B cell (primary cell): ENCODE measurements at regions of chr3 and their contacts with region 1.

Region 1: DNA sequence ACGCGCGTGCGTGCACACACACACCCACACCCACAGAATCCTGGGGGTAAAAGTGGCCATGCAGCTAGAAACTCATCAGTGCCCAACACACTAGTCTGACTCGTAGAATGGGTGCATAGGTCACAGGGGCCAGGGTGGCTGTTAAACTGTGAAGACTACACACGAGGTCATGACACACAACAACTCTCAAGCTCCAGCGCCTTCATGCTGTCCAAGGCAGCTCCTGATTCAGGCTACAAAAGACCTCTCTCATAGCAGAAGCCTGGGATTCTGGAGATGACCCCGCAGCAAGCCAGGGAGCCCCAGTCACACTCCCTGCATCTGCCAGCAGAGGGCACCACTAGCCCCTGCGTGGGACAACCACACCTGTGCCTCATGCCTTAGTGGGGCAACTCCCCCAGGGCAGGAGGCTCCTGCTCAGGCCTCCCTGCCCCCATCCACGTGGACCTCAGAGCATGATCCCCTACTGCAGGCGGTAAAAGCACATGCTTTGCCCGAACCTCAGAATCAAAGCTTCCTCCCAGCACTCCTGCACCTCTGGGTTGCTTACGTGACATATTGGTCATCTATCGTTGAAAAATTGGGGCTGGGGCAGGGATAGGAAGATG is 93.1 kb downstream of the LRIG1 start:
- DNase-seq: peak; percentile 70
- ATAC-seq: peak; percentile 89
- H3K4me3 ChIP-seq: no peak overlapping the region
- H3K4me3 Mint-ChIP-seq: no peak overlapping the region
- H3K27ac ChIP-seq: no peak overlapping the region
- H3K27ac Mint-ChIP-seq: no peak overlapping the region
- H3K4me1 ChIP-seq: no peaks in the 10 kb centered on the region
- H3K4me1 Mint-ChIP-seq: no peaks in the 10 kb centered on the region
- H3K27me3 ChIP-seq: no peaks in the 10 kb centered on the region
- H3K27me3 Mint-ChIP-seq: no peaks in the 10 kb centered on the region
- CTCF ChIP-seq: peak; percentile 80

Region 2: GRCh38 chr3:66276705-66277274 is 130.9 kb before region 1 on chr3:
- CTCF ChIA-PET with region 1: interaction called, 33 read pairs
- POLR2A ChIA-PET with region 1: no interaction called
- intact Hi-C with region 1: loop called (anchors 1 kb)
- DNase-seq: peak; percentile 71
- ATAC-seq: peak; percentile 45
- H3K4me3 ChIP-seq: no peak overlapping the region
- H3K4me3 Mint-ChIP-seq: no peak overlapping the region
- H3K27ac ChIP-seq: no peak overlapping the region
- H3K27ac Mint-ChIP-seq: no peak overlapping the region
- H3K4me1 ChIP-seq: no peaks in the 10 kb centered on the region
- H3K4me1 Mint-ChIP-seq: no peaks in the 10 kb centered on the region
- H3K27me3 ChIP-seq: no peaks in the 10 kb centered on the region
- H3K27me3 Mint-ChIP-seq: no peaks in the 10 kb centered on the region
- CTCF ChIP-seq: peak; percentile 87

Region 3: DNA sequence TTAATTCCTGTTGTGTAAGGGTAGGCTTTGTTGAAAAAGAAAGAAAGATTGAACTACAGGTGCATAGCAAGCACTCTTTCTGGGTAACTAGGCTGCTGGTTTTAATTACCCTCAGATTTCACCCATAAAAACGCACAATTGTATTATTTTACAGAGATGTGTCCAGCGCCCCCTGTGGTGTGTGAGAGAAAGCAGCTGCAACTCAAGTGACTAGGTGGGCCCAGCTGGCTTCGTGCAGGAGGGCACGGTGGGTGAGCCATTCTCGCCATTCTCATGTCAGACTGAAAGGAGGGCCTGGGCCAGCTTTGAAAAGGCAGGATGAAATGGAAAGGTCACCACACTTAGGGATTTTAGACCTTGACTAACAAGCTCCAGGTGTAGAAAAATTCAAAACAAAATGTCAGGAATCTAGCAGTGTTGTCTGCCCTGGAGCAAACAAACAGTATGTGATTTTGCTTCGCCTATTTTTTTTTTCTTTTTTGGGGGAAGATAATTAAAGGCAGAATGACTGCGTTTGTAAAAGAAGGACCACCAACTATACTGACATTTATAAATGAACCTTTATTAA is 29.4 kb before region 1 on chr3:
- CTCF ChIA-PET with region 1: interaction called, 17 read pairs
- POLR2A ChIA-PET with region 1: no interaction called
- intact Hi-C with region 1: no loop called
- DNase-seq: peak; percentile 25
- ATAC-seq: no peak
- H3K4me3 ChIP-seq: no peak overlapping the region
- H3K4me3 Mint-ChIP-seq: no peak overlapping the region
- H3K27ac ChIP-seq: no peak overlapping the region
- H3K27ac Mint-ChIP-seq: no peak overlapping the region
- H3K4me1 ChIP-seq: no peaks in the 10 kb centered on the region
- H3K4me1 Mint-ChIP-seq: no peaks in the 10 kb centered on the region
- H3K27me3 ChIP-seq: no peaks in the 10 kb centered on the region
- H3K27me3 Mint-ChIP-seq: no peaks in the 10 kb centered on the region
- CTCF ChIP-seq: peak; percentile 70

Region 4: DNA sequence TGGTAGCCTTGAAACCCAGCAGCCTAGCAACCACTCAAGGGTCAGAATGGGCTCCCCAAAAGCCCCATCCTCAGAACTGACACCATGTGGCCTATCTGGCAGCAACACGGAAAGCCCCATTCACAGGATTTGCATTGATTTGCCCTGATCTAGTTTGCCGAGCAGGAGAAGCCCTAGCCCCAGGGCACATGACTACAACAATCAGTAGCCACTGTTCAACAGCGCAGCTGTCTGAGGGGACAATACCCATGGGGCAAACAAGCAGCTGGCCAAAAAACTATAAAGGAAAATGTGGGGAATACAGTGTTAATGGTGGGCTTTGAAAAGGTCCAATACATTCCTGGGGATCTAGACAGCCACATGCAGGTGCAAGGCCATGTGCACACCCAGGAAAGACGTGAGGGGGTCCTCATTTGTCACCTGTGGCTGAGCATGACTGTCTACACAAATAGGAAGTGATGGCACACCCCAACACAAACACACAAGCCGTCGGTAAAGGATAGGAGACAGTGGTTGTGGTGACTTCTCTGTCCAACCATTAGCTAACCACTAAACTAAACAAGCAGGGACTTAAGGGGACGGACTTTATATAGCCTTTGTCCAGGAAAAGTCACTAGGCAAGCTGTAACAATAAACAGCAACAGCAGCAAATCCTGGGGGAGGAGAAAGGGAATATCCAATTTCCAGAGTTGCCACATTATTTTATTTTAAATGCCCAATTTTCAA is 20.6 kb before region 1 on chr3:
- CTCF ChIA-PET with region 1: interaction called, 31 read pairs
- POLR2A ChIA-PET with region 1: no interaction called
- intact Hi-C with region 1: no loop called
- DNase-seq: peak; percentile 78
- ATAC-seq: peak; percentile 61
- H3K4me3 ChIP-seq: peak overlapping the region in 1 of 5 experiments; percentile 16
- H3K4me3 Mint-ChIP-seq: peak overlapping the region; percentile 75
- H3K27ac ChIP-seq: peak overlapping the region; percentile 69 to 81
- H3K27ac Mint-ChIP-seq: peak overlapping the region; percentile 59
- H3K4me1 ChIP-seq: peaks cover 35 to 59% of the 10 kb centered on the region in 2 donors
- H3K4me1 Mint-ChIP-seq: peaks cover 56% of the 10 kb centered on the region
- H3K27me3 ChIP-seq: no peaks in the 10 kb centered on the region
- H3K27me3 Mint-ChIP-seq: no peaks in the 10 kb centered on the region
- CTCF ChIP-seq: no peak

Region 5: DNA sequence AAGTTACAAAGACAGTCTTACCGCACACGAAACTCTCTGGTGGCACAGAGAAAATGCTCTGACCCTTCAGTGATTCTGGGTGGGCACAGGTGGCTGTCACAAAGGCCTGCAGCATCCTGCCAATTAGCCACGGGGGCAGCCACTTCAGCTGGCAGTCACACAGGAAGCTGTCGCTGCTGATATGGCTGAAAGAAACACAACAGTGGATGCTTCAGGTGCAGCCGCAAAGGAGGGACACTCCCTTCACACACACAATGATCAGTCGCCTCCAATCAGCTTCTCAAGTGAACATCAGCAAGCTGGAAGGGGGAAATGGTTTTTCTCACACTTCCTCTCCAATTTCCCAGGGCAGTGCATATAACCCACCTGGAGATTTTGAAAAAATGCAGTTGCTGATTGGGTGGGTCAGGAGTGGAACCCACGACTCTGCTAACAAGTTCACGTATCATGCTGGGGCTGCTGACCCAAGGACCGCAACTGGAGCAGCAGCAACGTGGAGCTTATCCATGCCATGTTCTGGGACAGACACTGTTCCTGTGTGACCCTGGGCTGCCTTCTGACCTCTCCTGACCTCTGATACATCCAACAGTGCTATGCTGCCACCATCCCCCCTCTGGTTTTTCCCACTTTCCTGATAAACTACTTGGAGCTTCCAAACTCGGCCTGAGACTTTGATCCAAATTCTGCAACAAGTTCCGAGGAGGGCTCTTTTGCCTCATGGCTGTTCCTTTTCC is 13.5 kb before region 1 on chr3:
- CTCF ChIA-PET with region 1: interaction called, 31 read pairs
- POLR2A ChIA-PET with region 1: no interaction called
- intact Hi-C with region 1: no loop called
- DNase-seq: peak; percentile 79
- ATAC-seq: peak; percentile 88
- H3K4me3 ChIP-seq: peak overlapping the region; percentile 37 to 71 (median 58)
- H3K4me3 Mint-ChIP-seq: peak overlapping the region; percentile 92
- H3K27ac ChIP-seq: peak overlapping the region; percentile 66 to 72
- H3K27ac Mint-ChIP-seq: peak overlapping the region; percentile 92
- H3K4me1 ChIP-seq: peaks cover 35 to 48% of the 10 kb centered on the region in 2 donors
- H3K4me1 Mint-ChIP-seq: peaks cover 53% of the 10 kb centered on the region
- H3K27me3 ChIP-seq: no peaks in the 10 kb centered on the region
- H3K27me3 Mint-ChIP-seq: no peaks in the 10 kb centered on the region
- CTCF ChIP-seq: no peak

Region 6: GRCh38 chr3:66816090-66816761 is 408.5 kb after region 1 on chr3:
- CTCF ChIA-PET with region 1: interaction called, 87 read pairs
- POLR2A ChIA-PET with region 1: no interaction called
- intact Hi-C with region 1: no loop called
- DNase-seq: peak; percentile 52
- ATAC-seq: peak; percentile 47
- H3K4me3 ChIP-seq: no peak overlapping the region
- H3K4me3 Mint-ChIP-seq: no peak overlapping the region
- H3K27ac ChIP-seq: no peak overlapping the region
- H3K27ac Mint-ChIP-seq: no peak overlapping the region
- H3K4me1 ChIP-seq: no peaks in the 10 kb centered on the region
- H3K4me1 Mint-ChIP-seq: no peaks in the 10 kb centered on the region
- H3K27me3 ChIP-seq: peaks cover 0 to 6% (median 2%) of the 10 kb centered on the region in 4 experiments
- H3K27me3 Mint-ChIP-seq: peaks cover 15% of the 10 kb centered on the region
- CTCF ChIP-seq: peak; percentile 85

Region 7: DNA sequence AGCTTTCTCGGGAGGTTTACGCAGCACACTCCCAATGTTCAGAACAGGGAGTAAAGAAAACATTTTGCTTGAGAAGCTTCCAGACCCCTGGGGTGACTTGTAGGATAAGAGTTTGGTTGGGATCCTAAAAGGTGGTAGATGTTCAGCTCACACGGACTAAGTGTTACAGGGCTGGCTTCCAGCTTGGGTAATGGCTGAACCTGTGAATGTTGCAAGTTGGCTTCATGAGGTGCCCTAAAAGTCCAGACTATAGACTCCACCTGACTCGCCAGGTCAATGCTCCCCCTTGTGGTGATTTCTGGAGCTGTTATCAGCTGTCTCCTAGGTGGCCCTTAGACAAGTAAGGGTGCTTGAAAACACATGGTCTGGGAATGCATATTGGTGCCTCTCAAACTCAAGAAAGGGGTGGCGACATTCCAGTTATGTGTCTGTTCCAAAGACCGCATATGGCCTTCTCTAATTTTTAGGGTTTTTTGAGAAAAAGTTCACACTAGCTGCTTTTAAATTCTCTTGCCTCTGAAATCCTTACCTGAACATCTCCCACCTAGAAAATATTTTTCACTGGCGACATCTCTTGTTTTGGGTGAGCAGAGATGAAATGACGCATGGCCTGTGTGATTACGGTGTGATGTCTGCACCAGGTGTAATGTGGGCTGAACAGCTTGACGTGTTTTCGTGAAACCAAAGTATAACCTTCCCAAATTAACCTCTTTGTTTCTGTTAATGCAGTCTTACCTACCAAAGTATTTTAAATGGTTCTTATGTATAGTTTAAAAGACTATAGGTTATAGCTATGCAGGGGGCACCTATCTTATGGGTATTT is 414.7 kb after region 1 on chr3:
- CTCF ChIA-PET with region 1: interaction called, 87 read pairs
- POLR2A ChIA-PET with region 1: no interaction called
- intact Hi-C with region 1: no loop called
- DNase-seq: peak; percentile 72
- ATAC-seq: peak; percentile 67
- H3K4me3 ChIP-seq: no peak overlapping the region
- H3K4me3 Mint-ChIP-seq: no peak overlapping the region
- H3K27ac ChIP-seq: no peak overlapping the region
- H3K27ac Mint-ChIP-seq: no peak overlapping the region
- H3K4me1 ChIP-seq: no peaks in the 10 kb centered on the region
- H3K4me1 Mint-ChIP-seq: no peaks in the 10 kb centered on the region
- H3K27me3 ChIP-seq: no peaks in the 10 kb centered on the region
- H3K27me3 Mint-ChIP-seq: peaks cover 10% of the 10 kb centered on the region
- CTCF ChIP-seq: peak; percentile 85

Region 8: DNA sequence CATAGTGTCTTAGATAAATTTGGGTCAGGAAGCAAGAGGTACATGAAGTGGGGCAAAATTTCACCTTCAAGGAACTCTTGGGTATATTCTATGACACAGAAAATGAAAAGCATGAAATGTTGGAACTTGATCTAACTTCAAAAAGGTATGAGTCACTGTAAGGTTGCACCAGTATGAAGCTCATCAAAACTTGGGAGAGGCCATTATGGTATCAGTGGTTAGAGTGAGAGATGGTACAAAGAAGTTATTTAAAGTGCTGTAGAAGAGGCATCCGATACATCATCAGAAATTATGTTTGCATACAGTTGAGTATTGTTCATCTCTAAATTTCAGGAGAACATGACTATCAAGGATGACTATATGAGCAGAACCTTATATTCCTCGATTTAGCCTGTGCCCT is 1549.6 kb after region 1 on chr3:
- CTCF ChIA-PET with region 1: no interaction called
- POLR2A ChIA-PET with region 1: no interaction called
- intact Hi-C with region 1: no loop called
- DNase-seq: no peak
- ATAC-seq: no peak
- H3K4me3 ChIP-seq: no peak overlapping the region
- H3K4me3 Mint-ChIP-seq: no peak overlapping the region
- H3K27ac ChIP-seq: no peak overlapping the region
- H3K27ac Mint-ChIP-seq: no peak overlapping the region
- H3K4me1 ChIP-seq: no peaks in the 10 kb centered on the region
- H3K4me1 Mint-ChIP-seq: no peaks in the 10 kb centered on the region
- H3K27me3 ChIP-seq: no peaks in the 10 kb centered on the region
- H3K27me3 Mint-ChIP-seq: no peaks in the 10 kb centered on the region
- CTCF ChIP-seq: no peak